ENCODE measurements at regions of chr3 and their contacts with region 1.

Region 1: GRCh38 chr3:40309418-40309924 is at the start of gene EIF1B:
- DNase-seq: peak; percentile 99
- ATAC-seq: peak; percentile 92
- H3K4me3 Mint-ChIP-seq: peak within 1 kb of the TSS; percentile 100
- H3K27ac Mint-ChIP-seq: peak within 1 kb of the TSS; percentile 99
- H3K4me1 Mint-ChIP-seq: peaks cover 25% of the 10 kb centered on the region
- H3K27me3 Mint-ChIP-seq: no peaks in the 10 kb centered on the region
- total RNA-seq, gene EIF1B: 35.1 to 39.2 TPM

Region 2: GRCh38 chr3:39406368-39407258 is 902.9 kb before region 1 on chr3 and contains the start of gene RPSA:
- CTCF ChIA-PET with region 1: no interaction called
- POLR2A ChIA-PET with region 1: no interaction called
- intact Hi-C with region 1: loop called (anchors 2 kb)
- DNase-seq: peak; percentile 98
- ATAC-seq: peak; percentile 93
- H3K4me3 Mint-ChIP-seq: peak within 1 kb of the TSS; percentile 98
- H3K27ac Mint-ChIP-seq: peak within 1 kb of the TSS; percentile 98
- H3K4me1 Mint-ChIP-seq: peaks cover 39% of the 10 kb centered on the region
- H3K27me3 Mint-ChIP-seq: no peaks in the 10 kb centered on the region
- total RNA-seq, gene RPSA: 2,498 to 3,023 TPM

Region 3: DNA sequence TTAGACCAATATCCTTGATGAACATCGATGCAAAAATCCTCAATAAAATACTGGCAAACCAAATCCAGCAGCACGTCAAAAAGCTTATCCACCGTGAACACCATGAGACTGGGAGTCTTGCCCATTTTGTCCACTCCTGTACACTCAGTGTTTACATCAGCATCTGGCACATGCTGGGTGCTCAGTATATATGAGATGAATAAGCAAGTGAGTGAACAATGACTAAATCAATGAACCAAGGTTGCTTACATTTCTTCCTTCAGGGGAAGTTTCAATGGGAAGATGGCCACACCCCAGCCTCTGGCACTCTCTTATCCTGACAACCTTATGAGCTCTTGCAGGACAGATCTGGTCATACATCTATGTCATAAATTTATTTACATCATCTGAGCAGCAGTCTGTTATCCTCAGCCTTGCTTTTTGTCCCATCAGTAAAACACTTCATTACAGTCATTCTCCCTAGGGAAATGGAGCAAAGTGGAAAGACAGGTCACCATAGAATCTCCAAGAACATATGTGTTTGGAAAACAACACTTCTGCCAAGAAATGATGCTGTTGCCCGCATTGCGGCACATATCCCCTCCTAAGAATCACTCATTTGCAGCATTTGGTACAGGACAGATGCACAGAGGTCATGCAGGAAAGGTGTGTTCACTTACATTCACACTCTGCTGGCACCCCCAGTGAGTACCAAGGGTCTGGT is 171.7 kb before region 1 on chr3:
- CTCF ChIA-PET with region 1: no interaction called
- POLR2A ChIA-PET with region 1: no interaction called
- intact Hi-C with region 1: no loop called
- DNase-seq: no peak
- ATAC-seq: no peak
- H3K4me3 Mint-ChIP-seq: no peak overlapping the region
- H3K27ac Mint-ChIP-seq: no peak overlapping the region
- H3K4me1 Mint-ChIP-seq: no peaks in the 10 kb centered on the region
- H3K27me3 Mint-ChIP-seq: peaks cover 6% of the 10 kb centered on the region

Region 4: GRCh38 chr3:40298075-40298474 is 11.4 kb before region 1 on chr3:
- CTCF ChIA-PET with region 1: interaction called, 10 read pairs
- POLR2A ChIA-PET with region 1: no interaction called
- intact Hi-C with region 1: no loop called
- DNase-seq: no peak
- ATAC-seq: no peak
- H3K4me3 Mint-ChIP-seq: no peak overlapping the region
- H3K27ac Mint-ChIP-seq: no peak overlapping the region
- H3K4me1 Mint-ChIP-seq: no peaks in the 10 kb centered on the region
- H3K27me3 Mint-ChIP-seq: no peaks in the 10 kb centered on the region

Region 5: GRCh38 chr3:40337136-40338108 is 28.0 kb after region 1 on chr3:
- CTCF ChIA-PET with region 1: interaction called, 4 read pairs
- POLR2A ChIA-PET with region 1: interaction called, 4 read pairs
- intact Hi-C with region 1: loop called in 1 of 2 experiments (anchors 1 kb)
- DNase-seq: peak; percentile 36
- ATAC-seq: peak; percentile 86
- H3K4me3 Mint-ChIP-seq: no peak overlapping the region
- H3K27ac Mint-ChIP-seq: peak overlapping the region; percentile 69
- H3K4me1 Mint-ChIP-seq: peaks cover 20% of the 10 kb centered on the region
- H3K27me3 Mint-ChIP-seq: peaks cover 7% of the 10 kb centered on the region

Region 6: GRCh38 chr3:40608091-40608490 is 298.6 kb after region 1 on chr3:
- CTCF ChIA-PET with region 1: no interaction called
- POLR2A ChIA-PET with region 1: no interaction called
- intact Hi-C with region 1: no loop called
- DNase-seq: no peak
- ATAC-seq: peak; percentile 16
- H3K4me3 Mint-ChIP-seq: no peak overlapping the region
- H3K27ac Mint-ChIP-seq: no peak overlapping the region
- H3K4me1 Mint-ChIP-seq: no peaks in the 10 kb centered on the region
- H3K27me3 Mint-ChIP-seq: peaks cover 21% of the 10 kb centered on the region

Region 7: GRCh38 chr3:41198950-41199865 is 889.7 kb after region 1 on chr3 and contains the start of gene CTNNB1:
- CTCF ChIA-PET with region 1: interaction called, 4 read pairs
- POLR2A ChIA-PET with region 1: interaction called, 3 read pairs
- intact Hi-C with region 1: loop called in 1 of 2 experiments (anchors 1 kb)
- DNase-seq: peak; percentile 94
- ATAC-seq: peak; percentile 86
- H3K4me3 Mint-ChIP-seq: peak within 1 kb of the TSS; percentile 91
- H3K27ac Mint-ChIP-seq: peak within 1 kb of the TSS; percentile 88
- H3K4me1 Mint-ChIP-seq: peaks cover 36% of the 10 kb centered on the region
- H3K27me3 Mint-ChIP-seq: peaks cover 8% of the 10 kb centered on the region
- total RNA-seq, gene CTNNB1: 114 to 158 TPM

Measured in activated CD4-positive, alpha-beta T cell treated with anti-CD3 and anti-CD28 coated beads for 36 hours (primary cell).